ENCODE measurements at regions of chr6 and their contacts with region 1.

Region 1: DNA sequence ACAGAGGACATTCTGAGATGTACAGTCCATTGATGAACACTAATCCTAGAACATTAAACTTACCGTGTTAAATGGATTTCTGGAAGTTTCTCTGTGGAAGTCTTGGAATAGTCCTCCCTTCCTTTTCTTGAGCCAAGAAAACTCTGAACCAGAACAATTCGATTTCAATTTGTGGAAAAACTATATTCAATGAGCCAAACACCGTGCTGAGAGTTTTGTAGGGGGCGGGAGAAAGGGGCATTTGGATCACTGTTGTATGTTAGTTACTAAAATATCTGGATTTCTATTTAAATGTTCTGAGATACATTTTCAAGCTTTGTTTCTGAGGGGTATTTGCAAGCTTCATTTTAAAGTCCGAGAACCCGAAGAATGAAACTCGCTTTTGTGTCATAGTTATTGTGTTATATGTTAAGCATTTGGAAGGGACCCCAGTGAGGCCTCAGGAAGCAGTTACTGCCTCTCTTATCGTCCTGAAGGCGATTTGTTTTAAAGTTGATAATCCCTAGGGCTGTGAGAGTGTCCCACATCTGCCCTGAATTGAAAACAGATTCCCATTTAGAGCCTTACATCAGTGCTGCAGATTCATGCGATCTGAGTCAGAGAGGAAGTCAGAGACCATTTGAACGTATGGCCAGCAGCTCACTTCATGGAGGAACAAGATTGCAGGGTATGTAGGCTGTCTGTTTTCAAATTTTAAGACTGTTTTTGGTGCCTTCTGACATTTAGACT is 70.8 kb upstream of the SASH1 start:
- DNase-seq: peak; percentile 90
- H3K4me3 ChIP-seq: peak overlapping the region; percentile 42
- H3K27me3 ChIP-seq: no peaks in the 10 kb centered on the region
- CTCF ChIP-seq: no peak

Region 2: GRCh38 chr6:148304976-148305375 is 33.1 kb after region 1 on chr6:
- CTCF ChIA-PET with region 1: no interaction called
- POLR2A ChIA-PET with region 1: no interaction called
- DNase-seq: no peak
- H3K4me3 ChIP-seq: no peak overlapping the region
- H3K27me3 ChIP-seq: no peaks in the 10 kb centered on the region
- CTCF ChIP-seq: no peak

Region 3: GRCh38 chr6:148406579-148407371 is 134.9 kb after region 1 on chr6:
- CTCF ChIA-PET with region 1: no interaction called
- POLR2A ChIA-PET with region 1: interaction called, 13 read pairs
- DNase-seq: no peak
- H3K4me3 ChIP-seq: no peak overlapping the region
- H3K27me3 ChIP-seq: no peaks in the 10 kb centered on the region
- CTCF ChIP-seq: no peak